OCI-LY7 (cell line): ENCODE measurements at regions of chr2 and their contacts with region 1.

Region 1: GRCh38 chr2:11778923-11779757 is 32.7 kb downstream of the LPIN1 start:
- DNase-seq: peak; percentile 81
- H3K4me3 ChIP-seq: no peak overlapping the region
- H3K27ac ChIP-seq: no peak overlapping the region
- H3K4me1 ChIP-seq: peaks cover 15% of the 10 kb centered on the region
- CTCF ChIP-seq: peak; percentile 97

Region 2: GRCh38 chr2:11738589-11739436 is 40.3 kb before region 1 on chr2:
- CTCF ChIA-PET with region 1: interaction called, 9 read pairs
- POLR2A ChIA-PET with region 1: interaction called, 8 read pairs
- intact Hi-C with region 1: loop called (anchors 1 kb)
- DNase-seq: peak; percentile 49
- H3K4me3 ChIP-seq: no peak overlapping the region
- H3K27ac ChIP-seq: no peak overlapping the region
- H3K4me1 ChIP-seq: peaks cover 13% of the 10 kb centered on the region
- CTCF ChIP-seq: peak; percentile 66

Region 3: GRCh38 chr2:11795590-11795989 is 16.4 kb after region 1 on chr2:
- CTCF ChIA-PET with region 1: no interaction called
- POLR2A ChIA-PET with region 1: no interaction called
- intact Hi-C with region 1: no loop called
- DNase-seq: no peak
- H3K4me3 ChIP-seq: no peak overlapping the region
- H3K27ac ChIP-seq: no peak overlapping the region
- H3K4me1 ChIP-seq: no peaks in the 10 kb centered on the region
- CTCF ChIP-seq: no peak

Region 4: DNA sequence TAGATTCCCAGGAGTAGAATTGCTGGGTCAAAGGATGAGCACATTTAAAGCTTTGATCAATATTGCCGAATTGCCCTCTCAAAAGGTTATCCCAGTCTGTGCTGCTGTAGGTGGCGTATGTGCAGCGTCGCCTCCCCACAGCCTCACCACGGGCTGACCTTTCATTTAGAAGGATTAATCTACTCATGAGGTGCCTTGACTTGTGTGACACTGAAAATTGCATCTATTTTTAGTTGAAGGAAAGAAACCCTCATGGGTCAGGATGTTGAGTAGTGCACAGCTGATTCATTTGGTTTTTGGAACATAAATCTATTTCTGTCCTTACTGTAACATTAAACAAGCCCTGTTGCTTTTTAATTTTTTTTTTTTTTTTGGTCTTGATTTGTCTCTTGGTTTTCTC is 28.0 kb after region 1 on chr2:
- CTCF ChIA-PET with region 1: no interaction called
- POLR2A ChIA-PET with region 1: no interaction called
- intact Hi-C with region 1: no loop called
- DNase-seq: no peak
- H3K4me3 ChIP-seq: no peak overlapping the region
- H3K27ac ChIP-seq: no peak overlapping the region
- H3K4me1 ChIP-seq: no peaks in the 10 kb centered on the region
- CTCF ChIP-seq: no peak

Region 5: GRCh38 chr2:12052796-12053195 is 273.7 kb after region 1 on chr2:
- CTCF ChIA-PET with region 1: no interaction called
- POLR2A ChIA-PET with region 1: no interaction called
- intact Hi-C with region 1: no loop called
- DNase-seq: no peak
- H3K4me3 ChIP-seq: no peak overlapping the region
- H3K27ac ChIP-seq: no peak overlapping the region
- H3K4me1 ChIP-seq: peaks cover 57% of the 10 kb centered on the region
- CTCF ChIP-seq: no peak